ENCODE measurements at regions of chr7 and their contacts with region 1.

Region 1: GRCh38 chr7:23298885-23299769 is at the start of gene MALSU1:
- DNase-seq: peak; percentile 93
- H3K4me3 Mint-ChIP-seq: peak within 1 kb of the TSS; percentile 86
- H3K27ac Mint-ChIP-seq: peak within 1 kb of the TSS; percentile 92
- H3K4me1 Mint-ChIP-seq: peaks cover 32% of the 10 kb centered on the region
- H3K27me3 Mint-ChIP-seq: no peaks in the 10 kb centered on the region
- total RNA-seq, gene MALSU1: 83.6 and 89.0 TPM in 2 replicates

Region 2: GRCh38 chr7:23347682-23348180 is 48.6 kb after region 1 on chr7:
- intact Hi-C with region 1: loop called (anchors 5 kb)
- DNase-seq: no peak
- H3K4me3 Mint-ChIP-seq: peak overlapping the region; percentile 53
- H3K27ac Mint-ChIP-seq: peak overlapping the region; percentile 64
- H3K4me1 Mint-ChIP-seq: peaks cover 50% of the 10 kb centered on the region
- H3K27me3 Mint-ChIP-seq: no peaks in the 10 kb centered on the region

Region 3: GRCh38 chr7:23418046-23418445 is 118.9 kb after region 1 on chr7:
- intact Hi-C with region 1: no loop called
- DNase-seq: no peak
- H3K4me3 Mint-ChIP-seq: no peak overlapping the region
- H3K27ac Mint-ChIP-seq: no peak overlapping the region
- H3K4me1 Mint-ChIP-seq: peaks cover 24% of the 10 kb centered on the region
- H3K27me3 Mint-ChIP-seq: no peaks in the 10 kb centered on the region